ENCODE measurements at regions of chr11 and their contacts with region 1.

Region 1: DNA sequence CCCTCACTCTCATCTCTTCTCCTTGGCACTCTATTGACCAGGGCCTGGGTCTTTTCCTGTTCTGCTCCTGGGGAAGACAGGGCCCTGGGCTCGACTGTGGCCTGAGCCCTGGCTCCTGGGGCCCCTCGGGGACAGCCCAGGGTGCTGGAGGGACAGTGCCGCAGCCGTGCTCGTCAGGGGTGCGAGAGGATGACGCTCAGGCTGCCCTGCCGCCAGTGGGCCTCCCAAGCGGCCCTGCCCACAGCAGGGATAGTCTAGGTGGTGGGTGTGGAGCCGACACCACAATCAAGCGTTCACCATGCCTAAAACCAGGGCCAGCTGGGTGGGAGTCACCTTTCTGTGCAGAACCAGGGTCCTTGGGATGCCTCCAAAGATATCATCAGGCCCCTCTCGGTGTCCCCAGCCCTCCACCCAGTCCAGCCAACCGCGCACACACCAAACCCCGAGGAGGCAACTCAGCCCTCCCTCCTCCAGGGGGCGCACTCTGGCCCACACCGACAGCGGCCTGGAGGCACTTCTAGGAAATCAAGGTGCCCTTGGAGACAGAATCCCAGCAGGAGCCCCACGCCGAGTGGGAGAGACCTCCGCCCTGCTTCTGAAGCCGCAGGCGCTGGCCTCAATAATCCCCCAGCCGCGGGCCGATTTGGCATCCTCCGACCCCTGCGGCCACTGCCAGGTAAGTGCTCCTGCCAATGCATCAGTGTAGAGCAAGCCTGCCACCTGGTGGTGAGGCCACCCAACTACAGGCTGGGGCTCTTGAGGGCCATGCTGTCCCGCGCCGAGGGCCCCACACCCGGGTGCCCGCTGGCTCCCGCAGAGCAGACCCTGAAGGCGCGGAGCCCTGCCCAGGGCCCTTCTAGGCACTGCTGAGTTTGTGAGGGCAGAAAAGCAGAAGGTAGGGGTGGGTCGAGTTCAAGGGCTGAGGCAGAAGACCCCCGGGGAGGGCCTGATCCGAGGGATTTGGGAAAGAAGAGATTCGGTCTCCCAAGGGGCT is 496.4 kb downstream of the BUD13 start:
- DNase-seq: peak; percentile 81
- H3K4me3 ChIP-seq: peak overlapping the region; percentile 36 to 41
- H3K27ac ChIP-seq: no peak overlapping the region
- H3K4me1 ChIP-seq: no peaks in the 10 kb centered on the region
- H3K27me3 ChIP-seq: no peaks in the 10 kb centered on the region
- CTCF ChIP-seq: peak; percentile 74 to 92 (median 79)
- POLR2A ChIP-seq: no peak

Region 2: GRCh38 chr11:115334932-115335788 is 941.2 kb before region 1 on chr11:
- intact Hi-C with region 1: loop called (anchors 10 kb)
- DNase-seq: no peak
- H3K4me3 ChIP-seq: no peak overlapping the region
- H3K27ac ChIP-seq: no peak overlapping the region
- H3K4me1 ChIP-seq: no peaks in the 10 kb centered on the region
- H3K27me3 ChIP-seq: no peaks in the 10 kb centered on the region
- CTCF ChIP-seq: peak; percentile 26 to 76 (median 33)
- POLR2A ChIP-seq: no peak